B cell (primary cell): ENCODE measurements at regions of chr6 and their contacts with region 1.

Region 1: GRCh38 chr6:156948277-156948676 is 171.1 kb downstream of the ARID1B start:
- DNase-seq: no peak
- ATAC-seq: no peak
- H3K4me3 ChIP-seq: no peak overlapping the region
- H3K4me3 Mint-ChIP-seq: no peak overlapping the region
- H3K27ac ChIP-seq: no peak overlapping the region
- H3K27ac Mint-ChIP-seq: no peak overlapping the region
- H3K4me1 ChIP-seq: peaks cover 22 to 32% of the 10 kb centered on the region in 2 donors
- H3K4me1 Mint-ChIP-seq: peaks cover 60% of the 10 kb centered on the region
- H3K27me3 ChIP-seq: no peaks in the 10 kb centered on the region
- H3K27me3 Mint-ChIP-seq: no peaks in the 10 kb centered on the region
- CTCF ChIP-seq: no peak

Region 2: DNA sequence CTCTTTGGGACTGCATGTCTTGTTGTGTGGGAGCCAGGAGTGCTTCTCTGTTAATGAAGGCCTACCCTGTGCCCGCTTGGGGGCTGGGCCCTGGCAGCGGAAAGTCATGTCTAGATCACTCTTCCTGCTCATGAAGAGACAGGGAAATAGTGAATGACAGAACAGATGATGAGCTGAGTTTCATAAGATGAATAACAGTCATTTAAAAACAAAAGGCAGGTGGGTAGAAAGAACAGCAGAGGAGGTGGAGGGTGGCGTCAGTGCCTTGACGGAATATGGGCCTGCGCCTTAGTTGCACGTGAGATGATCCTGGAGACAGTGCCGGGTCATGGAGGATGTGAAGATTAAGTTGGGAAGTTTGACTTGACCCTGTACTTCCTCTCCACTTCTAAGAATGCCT is 85.6 kb before region 1 on chr6:
- CTCF ChIA-PET with region 1: no interaction called
- POLR2A ChIA-PET with region 1: interaction called, 14 read pairs
- intact Hi-C with region 1: no loop called
- DNase-seq: no peak
- ATAC-seq: no peak
- H3K4me3 ChIP-seq: no peak overlapping the region
- H3K4me3 Mint-ChIP-seq: peak overlapping the region; percentile 15
- H3K27ac ChIP-seq: peak overlapping the region in 1 of 2 donors; percentile 40
- H3K27ac Mint-ChIP-seq: peak overlapping the region; percentile 38
- H3K4me1 ChIP-seq: peaks cover 47 to 55% of the 10 kb centered on the region in 2 donors
- H3K4me1 Mint-ChIP-seq: peaks cover 85% of the 10 kb centered on the region
- H3K27me3 ChIP-seq: no peaks in the 10 kb centered on the region
- H3K27me3 Mint-ChIP-seq: no peaks in the 10 kb centered on the region
- CTCF ChIP-seq: no peak